Sciatic nerve (tissue), 2 donors: ENCODE measurements at regions of chr4 and their contacts with region 1.

Region 1: DNA sequence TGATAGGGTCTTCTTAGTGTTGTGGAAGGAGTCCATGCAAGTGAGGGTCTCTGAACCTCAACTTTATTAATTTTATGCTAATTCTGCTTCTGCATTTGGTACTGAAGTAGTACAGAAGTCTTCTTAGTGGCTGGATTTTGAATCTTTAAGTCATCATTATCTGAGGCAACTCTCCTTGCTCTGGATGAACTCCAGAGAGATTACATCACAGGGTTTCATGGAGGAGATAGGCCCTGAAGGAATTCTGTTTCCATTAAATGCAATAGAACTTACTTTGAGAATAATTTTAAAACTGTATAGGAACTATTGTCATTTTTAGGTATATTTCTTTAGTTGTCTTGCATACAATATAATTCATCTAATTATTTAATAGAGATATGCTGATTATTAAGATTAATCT is 451.2 kb downstream of the FAT4 start:
- DNase-seq: no peak
- ATAC-seq: no peak

Region 2: DNA sequence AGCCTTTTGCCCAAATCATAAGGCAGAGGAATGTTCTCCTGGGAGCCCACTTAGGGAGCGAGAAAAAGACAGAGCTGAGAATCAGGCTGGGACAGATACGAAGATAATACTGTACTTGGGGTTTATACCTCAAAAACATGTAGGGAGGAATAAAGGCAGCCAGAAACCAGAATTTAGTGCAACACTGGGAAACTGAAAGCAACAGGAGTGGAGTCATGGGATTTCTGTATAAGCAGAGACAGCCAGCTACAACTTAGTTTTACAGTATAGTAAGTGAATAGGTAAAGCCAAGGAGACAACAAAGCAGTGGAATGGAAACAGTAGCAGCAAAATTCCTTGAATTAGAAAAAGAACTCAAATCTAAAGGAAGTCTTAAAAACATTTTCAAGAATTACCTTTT is 38.0 kb before region 1 on chr4:
- intact Hi-C with region 1: loop called (anchors 1 kb)
- DNase-seq: no peak
- ATAC-seq: no peak

Region 3: DNA sequence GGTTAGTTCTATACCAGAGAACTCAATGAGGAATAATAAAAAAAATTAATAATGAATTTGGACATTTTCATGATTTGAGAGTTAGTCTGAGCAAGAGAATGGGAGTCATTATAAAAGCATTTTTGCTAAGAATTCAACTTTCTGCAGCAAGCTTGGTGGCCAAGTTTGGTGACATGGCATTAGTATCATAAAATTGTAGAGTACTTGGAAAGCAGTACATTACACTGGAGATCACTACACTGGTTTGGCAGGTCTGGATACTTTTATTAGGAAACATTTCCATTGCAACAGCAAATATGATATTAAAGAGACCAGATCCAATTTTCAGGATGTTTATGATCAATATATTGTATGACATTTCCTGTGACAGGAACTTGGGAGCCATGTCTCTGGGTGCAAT is 1617.7 kb after region 1 on chr4:
- intact Hi-C with region 1: no loop called
- DNase-seq: no peak
- ATAC-seq: peak; percentile 22